Dorsolateral prefrontal cortex (tissue), 120 donors: ENCODE measurements at regions of chr19 and their contacts with region 1.

Region 1: DNA sequence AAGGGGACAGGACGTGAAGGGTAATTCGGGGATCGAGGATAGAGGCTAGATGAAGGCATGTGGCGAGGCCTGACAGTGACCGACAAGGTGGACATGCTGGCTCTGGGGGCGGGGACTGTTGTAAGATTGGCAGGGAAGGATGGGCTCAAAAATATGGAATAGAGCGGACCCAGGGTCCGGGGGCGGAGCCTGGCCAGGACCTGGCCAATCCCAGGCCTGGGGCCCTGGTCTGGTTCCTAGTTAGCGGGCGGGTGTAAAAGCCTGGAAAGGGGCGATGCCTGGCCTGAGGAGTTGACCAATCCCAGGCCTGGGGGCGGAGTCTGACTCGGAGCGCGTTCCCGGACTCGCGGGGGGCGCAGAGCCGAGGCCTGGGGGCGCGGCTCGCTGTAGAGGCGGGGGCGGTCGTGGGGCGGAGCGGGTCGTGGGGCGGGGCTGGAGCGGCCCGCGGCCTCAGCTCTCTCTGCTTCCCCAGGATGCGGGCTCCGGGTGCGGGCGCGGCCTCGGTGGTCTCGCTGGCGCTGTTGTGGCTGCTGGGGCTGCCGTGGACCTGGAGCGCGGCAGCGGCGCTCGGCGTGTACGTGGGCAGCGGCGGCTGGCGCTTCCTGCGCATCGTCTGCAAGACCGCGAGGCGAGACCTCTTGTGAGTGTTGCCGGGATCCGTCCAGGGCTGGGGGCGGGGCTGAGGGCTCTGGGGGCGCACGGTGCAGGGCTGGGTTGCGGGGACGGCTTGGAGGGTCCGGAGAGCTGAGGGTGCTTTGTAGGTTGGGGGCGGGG is at the start of gene SLC27A1:
- DNase-seq: peak; percentile 99 to 100 (median 100)
- H3K4me3 ChIP-seq: peak within 1 kb of the TSS; percentile 65 to 99 (median 86)
- H3K27ac ChIP-seq: peak within 1 kb of the TSS; percentile 49 to 99 (median 89)
- H3K27me3 ChIP-seq: no peaks in the 10 kb centered on the region
- CTCF ChIP-seq: peak in 10 of 56 donors; percentile 7 to 51 (median 16)
- total RNA-seq, gene SLC27A1: 30.6 to 100.0 (median 53.6) TPM

Region 2: DNA sequence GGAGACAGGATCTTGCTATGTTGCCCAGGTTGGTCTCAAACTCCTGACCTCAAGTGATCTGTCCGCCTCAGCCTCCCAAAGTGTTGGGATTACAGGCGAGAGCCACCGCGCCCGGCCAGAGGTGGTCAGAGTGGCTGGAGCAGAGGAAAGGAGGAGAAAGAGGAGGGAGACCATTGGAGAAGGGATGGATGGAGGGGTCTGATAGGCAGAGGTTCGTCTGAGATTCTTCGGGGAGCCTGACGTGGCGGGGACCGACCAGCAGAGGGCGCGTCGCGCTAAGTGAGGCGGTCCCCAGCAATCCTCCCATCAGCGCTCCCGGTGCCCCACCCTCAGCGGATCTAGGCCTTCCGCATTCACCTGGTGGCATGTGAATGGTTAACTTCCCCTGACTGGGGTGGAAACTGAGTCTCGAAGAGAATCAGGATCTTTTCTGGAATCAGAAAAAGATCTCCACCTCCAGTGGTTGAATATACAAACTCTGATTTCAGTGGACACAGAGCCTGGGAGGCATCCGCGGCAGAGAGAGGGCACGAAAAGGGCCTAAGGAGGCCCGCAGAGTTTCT is 124.1 kb before region 1 on chr19:
- intact Hi-C with region 1: loop called (anchors 5 to 10 kb)
- DNase-seq: peak; percentile 63 to 84 (median 76)
- H3K4me3 ChIP-seq: no peak overlapping the region
- H3K27ac ChIP-seq: peak overlapping the region in 4 of 59 donors; percentile 16 to 30 (median 24)
- H3K27me3 ChIP-seq: peaks cover 0 to 20% (median 0%) of the 10 kb centered on the region in 45 donors
- CTCF ChIP-seq: peak; percentile 69 to 99 (median 95)

Region 3: DNA sequence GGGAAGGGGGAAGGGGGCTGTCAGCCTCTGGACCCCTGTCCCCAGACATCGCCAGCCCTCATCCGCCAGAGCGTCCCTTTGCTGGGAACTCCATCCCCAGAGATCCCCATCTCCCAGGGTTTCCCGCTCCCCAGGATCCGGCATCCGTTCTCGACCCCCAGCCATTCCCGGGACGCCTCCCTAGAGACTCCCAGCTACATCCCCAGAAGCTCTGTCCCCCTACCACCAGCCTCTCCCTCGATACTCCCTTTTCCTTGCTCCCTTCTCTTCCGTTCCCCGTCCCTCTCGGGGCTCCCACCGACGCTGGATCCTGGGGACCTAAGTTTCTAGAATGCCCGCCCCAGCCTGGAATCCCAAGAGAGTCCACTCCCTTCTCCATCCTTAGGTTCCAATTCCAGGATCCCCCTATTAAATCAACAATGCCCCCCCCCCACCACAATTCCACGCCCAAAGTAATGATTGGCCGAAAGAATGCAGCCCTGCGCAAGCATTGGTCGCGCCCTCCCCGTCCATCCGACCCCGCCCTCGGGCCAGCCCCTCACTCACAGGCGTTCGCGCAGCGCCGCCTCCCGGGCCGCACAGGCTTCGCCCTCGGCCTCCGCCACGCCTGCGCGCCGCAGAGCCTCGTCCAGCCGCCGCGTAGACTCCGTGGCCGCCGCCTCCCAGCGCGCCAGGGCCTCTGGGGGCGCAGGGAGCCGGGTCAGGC is 79.4 kb before region 1 on chr19:
- intact Hi-C with region 1: loop called in 1 of 2 experiments (anchors 10 kb)
- DNase-seq: peak; percentile 46 to 91 (median 86)
- H3K4me3 ChIP-seq: peak overlapping the region; percentile 36 to 73 (median 60)
- H3K27ac ChIP-seq: peak overlapping the region in 4 of 59 donors; percentile 25 to 62 (median 34)
- H3K27me3 ChIP-seq: peaks cover 0 to 21% (median 0%) of the 10 kb centered on the region in 45 donors
- CTCF ChIP-seq: peak; percentile 35 to 87 (median 72)

Region 4: DNA sequence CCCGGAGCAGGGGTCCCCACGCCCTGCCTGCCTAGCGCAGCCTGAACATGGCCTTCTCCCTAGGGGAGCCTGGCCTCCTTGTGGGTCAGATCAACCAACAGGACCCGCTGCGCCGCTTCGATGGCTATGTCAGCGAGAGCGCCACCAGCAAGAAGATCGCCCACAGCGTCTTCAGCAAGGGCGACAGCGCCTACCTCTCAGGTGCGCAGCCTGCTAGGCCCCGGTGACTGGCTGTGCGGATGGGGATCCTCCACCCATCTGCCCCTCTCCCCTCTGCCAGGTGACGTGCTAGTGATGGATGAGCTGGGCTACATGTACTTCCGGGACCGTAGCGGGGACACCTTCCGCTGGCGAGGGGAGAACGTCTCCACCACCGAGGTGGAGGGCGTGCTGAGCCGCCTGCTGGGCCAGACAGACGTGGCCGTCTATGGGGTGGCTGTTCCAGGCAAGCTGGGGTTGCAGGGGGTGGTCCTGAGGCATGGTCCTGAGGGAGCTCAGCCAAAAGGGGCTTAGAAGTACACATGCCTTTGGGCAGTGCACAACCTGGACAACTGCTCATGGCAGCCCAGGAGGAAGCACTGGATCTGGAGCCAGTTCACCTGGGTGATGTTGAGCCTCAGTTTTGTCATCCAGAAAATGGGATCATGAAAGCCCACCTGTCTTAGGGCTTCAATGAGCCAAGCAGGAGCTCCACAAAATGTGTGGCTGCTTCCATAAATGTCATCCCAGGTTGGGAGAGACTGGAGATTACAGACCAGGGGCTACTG is 30.4 kb after region 1 on chr19:
- intact Hi-C with region 1: no loop called
- DNase-seq: no peak
- H3K4me3 ChIP-seq: no peak overlapping the region
- H3K27ac ChIP-seq: peak overlapping the region in 52 of 59 donors; percentile 11 to 89 (median 74)
- H3K27me3 ChIP-seq: no peaks in the 10 kb centered on the region
- CTCF ChIP-seq: no peak

Region 5: GRCh38 chr19:17511724-17512573 is 41.7 kb after region 1 on chr19:
- intact Hi-C with region 1: loop called (anchors 2 to 5 kb)
- DNase-seq: peak; percentile 78 to 91 (median 84)
- H3K4me3 ChIP-seq: peak overlapping the region; percentile 65 to 100 (median 94)
- H3K27ac ChIP-seq: peak overlapping the region; percentile 96 to 100 (median 99)
- H3K27me3 ChIP-seq: no peaks in the 10 kb centered on the region
- CTCF ChIP-seq: peak in 55 of 56 donors; percentile 32 to 71 (median 58)

Region 6: GRCh38 chr19:17522988-17523872 is 53.0 kb after region 1 on chr19:
- intact Hi-C with region 1: no loop called
- DNase-seq: peak in 2 of 10 donors; percentile 41 to 53
- H3K4me3 ChIP-seq: no peak overlapping the region
- H3K27ac ChIP-seq: peak overlapping the region in 20 of 59 donors; percentile 0 to 58 (median 26)
- H3K27me3 ChIP-seq: no peaks in the 10 kb centered on the region
- CTCF ChIP-seq: no peak

Region 7: GRCh38 chr19:17555480-17555928 is 85.2 kb after region 1 on chr19 and contains the start of gene COLGALT1:
- intact Hi-C with region 1: loop called in 1 of 2 experiments (anchors 5 kb)
- DNase-seq: peak; percentile 98 to 100 (median 99)
- H3K4me3 ChIP-seq: peak within 1 kb of the TSS; percentile 72 to 98 (median 92)
- H3K27ac ChIP-seq: peak within 1 kb of the TSS in 58 of 59 donors; percentile 4 to 91 (median 76)
- H3K27me3 ChIP-seq: no peaks in the 10 kb centered on the region
- CTCF ChIP-seq: peak in 8 of 56 donors; percentile 3 to 28 (median 16)
- total RNA-seq, gene COLGALT1: 20.9 to 73.4 (median 38.7) TPM